Posterior cingulate gyrus (tissue), 11 donors: ENCODE measurements at regions of chr11 and their contacts with region 1.

Region 1: GRCh38 chr11:62726915-62727763 is at the start of gene HNRNPUL2:
- DNase-seq: peak; percentile 96 to 100 (median 98)

Region 2: GRCh38 chr11:62705880-62706849 is 21.0 kb before region 1 on chr11:
- intact Hi-C with region 1: loop called (anchors 2 kb)
- DNase-seq: peak; percentile 91 to 99 (median 96)

Region 3: DNA sequence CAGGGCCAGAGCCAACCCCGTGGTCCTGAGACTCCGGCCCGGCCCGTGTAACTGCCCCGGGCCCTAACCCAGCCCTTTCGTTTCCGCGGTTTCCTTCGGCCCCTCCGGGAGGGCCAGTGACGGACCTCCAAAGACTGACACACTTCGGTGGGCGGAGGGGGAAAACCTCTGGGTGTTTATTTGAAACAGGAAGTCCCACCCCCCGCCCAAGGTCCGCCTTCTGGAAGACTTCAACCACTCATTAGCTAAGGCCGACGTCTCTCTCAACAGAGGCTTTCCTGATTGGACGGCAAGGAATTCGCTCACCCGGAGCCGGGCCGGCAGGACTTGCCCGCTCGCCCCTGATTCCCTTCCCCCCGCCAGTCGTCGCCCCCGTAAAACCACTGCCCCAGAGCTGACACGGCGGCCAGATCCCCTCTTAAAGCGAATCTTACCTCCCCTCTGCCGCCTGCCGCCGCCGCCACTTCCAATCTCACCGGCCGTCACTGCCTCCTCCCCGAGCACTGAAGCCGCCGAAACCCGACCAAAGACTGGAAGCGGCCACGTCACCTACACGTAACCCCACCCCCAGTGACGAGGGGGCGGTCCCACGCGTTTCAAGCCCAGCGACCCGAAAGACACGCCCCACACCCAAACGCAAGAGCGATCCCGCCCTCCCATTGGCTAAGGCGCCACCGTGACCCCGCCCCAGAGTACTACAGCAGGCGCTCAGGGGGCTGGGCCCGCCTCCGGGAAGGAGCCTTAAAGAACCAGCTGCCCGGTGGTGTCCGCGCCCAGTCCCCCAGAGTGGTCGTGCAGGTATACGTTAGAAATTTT is 104.6 kb after region 1 on chr11 and contains the start of gene STX5:
- intact Hi-C with region 1: loop called (anchors 10 kb)
- DNase-seq: peak; percentile 100